K562 (cell line): ENCODE measurements at regions of chr1 and their contacts with region 1.

Region 1: DNA sequence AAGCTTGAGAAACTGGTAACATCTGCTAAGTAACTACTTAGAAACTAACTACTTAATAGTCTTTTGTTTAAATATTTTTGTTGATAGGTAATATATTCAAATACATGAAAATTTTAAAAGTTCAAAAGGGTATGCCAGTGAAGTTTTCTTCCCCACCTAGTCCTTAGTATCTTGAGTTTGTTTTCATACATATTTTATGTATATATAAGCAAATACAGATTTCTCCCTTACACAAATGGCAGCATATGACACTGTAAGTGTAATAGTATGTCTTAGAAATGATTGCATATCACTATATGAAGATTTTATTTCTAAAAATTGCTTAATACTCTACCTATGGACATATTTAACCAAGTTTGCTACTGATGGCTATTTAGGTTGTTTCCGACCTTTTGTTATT is 38.9 kb downstream of the MARK1 start:
- DNase-seq: no peak
- ATAC-seq: no peak
- H3K4me3 ChIP-seq: no peak overlapping the region
- H3K27ac ChIP-seq: no peak overlapping the region
- H3K4me1 ChIP-seq: no peaks in the 10 kb centered on the region
- H3K27me3 ChIP-seq: no peaks in the 10 kb centered on the region
- CTCF ChIP-seq: no peak
- EP300 ChIP-seq: no peak
- POLR2A ChIP-seq: no peak
- RAD21 ChIP-seq: no peak

Region 2: DNA sequence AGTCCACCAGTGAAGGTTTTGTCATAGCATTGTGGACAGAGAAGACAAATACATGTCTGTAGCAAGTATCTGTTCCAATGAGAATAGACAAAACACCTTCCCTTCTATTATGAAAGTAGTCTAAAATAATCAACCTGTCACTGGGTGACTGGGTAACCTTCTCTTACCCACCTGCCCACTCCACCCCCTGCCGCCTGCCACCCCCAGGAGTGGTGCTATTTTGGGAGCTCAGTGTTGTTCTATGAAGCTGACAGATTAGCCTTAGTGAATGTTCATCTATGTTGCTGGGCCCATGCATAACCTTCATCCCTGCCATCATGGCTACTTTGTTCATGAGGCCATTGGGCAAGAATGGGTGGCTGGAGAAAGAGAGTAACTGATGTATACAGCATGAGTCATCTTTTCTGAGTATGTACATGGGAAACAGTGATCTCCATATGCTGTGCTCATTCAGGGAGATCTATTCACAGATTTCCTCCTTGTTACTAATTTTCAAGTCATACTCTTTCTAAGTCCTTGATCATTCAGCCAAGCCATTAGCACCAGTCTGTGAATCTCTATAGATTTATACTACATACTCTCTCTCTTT is 14.1 kb before region 1 on chr1:
- CTCF ChIA-PET with region 1: no interaction called
- POLR2A ChIA-PET with region 1: interaction called, 3 read pairs
- in situ Hi-C with region 1: no loop called
- intact Hi-C with region 1: loop called (anchors 1 kb)
- DNase-seq: no peak
- ATAC-seq: no peak
- H3K4me3 ChIP-seq: no peak overlapping the region
- H3K27ac ChIP-seq: no peak overlapping the region
- H3K4me1 ChIP-seq: no peaks in the 10 kb centered on the region
- H3K27me3 ChIP-seq: no peaks in the 10 kb centered on the region; a peak in 1 of 5 replicates
- CTCF ChIP-seq: no peak
- EP300 ChIP-seq: no peak
- POLR2A ChIP-seq: no peak
- RAD21 ChIP-seq: no peak

Region 3: DNA sequence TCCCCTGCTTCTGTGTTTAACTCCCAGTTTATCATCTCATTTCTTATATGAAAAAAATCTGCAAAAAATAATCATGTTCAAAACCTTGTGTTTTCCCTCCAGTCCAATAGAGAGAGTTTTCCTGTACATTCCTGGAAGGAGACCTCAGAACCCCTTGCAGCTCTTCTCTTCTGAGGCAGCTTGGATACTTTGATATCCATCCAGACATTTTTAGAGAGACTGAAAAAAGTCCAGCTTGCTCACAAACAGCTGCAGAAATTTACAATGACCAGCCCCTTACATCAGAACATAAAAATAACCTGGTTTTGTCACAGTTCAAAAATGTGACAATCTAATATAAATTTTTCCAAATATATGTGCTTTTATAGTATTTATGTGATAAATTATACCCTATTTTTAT is 50.0 kb after region 1 on chr1:
- CTCF ChIA-PET with region 1: no interaction called
- POLR2A ChIA-PET with region 1: no interaction called
- in situ Hi-C with region 1: no loop called
- intact Hi-C with region 1: no loop called
- DNase-seq: no peak
- ATAC-seq: no peak
- H3K4me3 ChIP-seq: no peak overlapping the region
- H3K27ac ChIP-seq: no peak overlapping the region
- H3K4me1 ChIP-seq: no peaks in the 10 kb centered on the region
- H3K27me3 ChIP-seq: no peaks in the 10 kb centered on the region
- CTCF ChIP-seq: no peak
- EP300 ChIP-seq: no peak
- POLR2A ChIP-seq: no peak
- RAD21 ChIP-seq: no peak